ENCODE measurements at regions of chr7 and their contacts with region 1.

Region 1: GRCh38 chr7:5665094-5666025 is 116.1 kb downstream of the RNF216 start:
- DNase-seq: peak; percentile 78
- ATAC-seq: peak; percentile 52
- H3K4me3 ChIP-seq: no peak overlapping the region
- H3K4me3 Mint-ChIP-seq: no peak overlapping the region
- H3K27ac ChIP-seq: no peak overlapping the region
- H3K27ac Mint-ChIP-seq: no peak overlapping the region
- H3K4me1 ChIP-seq: peaks cover 19 to 28% of the 10 kb centered on the region in 2 donors
- H3K4me1 Mint-ChIP-seq: peaks cover 29% of the 10 kb centered on the region
- H3K27me3 ChIP-seq: no peaks in the 10 kb centered on the region
- H3K27me3 Mint-ChIP-seq: no peaks in the 10 kb centered on the region
- CTCF ChIP-seq: peak; percentile 85

Region 2: GRCh38 chr7:5557920-5558401 is 107.4 kb before region 1 on chr7:
- CTCF ChIA-PET with region 1: interaction called, 22 read pairs
- POLR2A ChIA-PET with region 1: no interaction called
- intact Hi-C with region 1: no loop called
- DNase-seq: peak; percentile 77
- ATAC-seq: peak; percentile 18
- H3K4me3 ChIP-seq: peak overlapping the region; percentile 41 to 67 (median 58)
- H3K4me3 Mint-ChIP-seq: peak overlapping the region; percentile 92
- H3K27ac ChIP-seq: peak overlapping the region; percentile 92 to 93
- H3K27ac Mint-ChIP-seq: peak overlapping the region; percentile 96
- H3K4me1 ChIP-seq: peaks cover 47 to 64% of the 10 kb centered on the region in 2 donors
- H3K4me1 Mint-ChIP-seq: peaks cover 52% of the 10 kb centered on the region
- H3K27me3 ChIP-seq: no peaks in the 10 kb centered on the region
- H3K27me3 Mint-ChIP-seq: no peaks in the 10 kb centered on the region
- CTCF ChIP-seq: no peak

Region 3: GRCh38 chr7:5677538-5678294 is 12.4 kb after region 1 on chr7:
- CTCF ChIA-PET with region 1: interaction called, 86 read pairs
- POLR2A ChIA-PET with region 1: interaction called, 3 read pairs
- intact Hi-C with region 1: no loop called
- DNase-seq: peak; percentile 74
- ATAC-seq: peak; percentile 22
- H3K4me3 ChIP-seq: no peak overlapping the region
- H3K4me3 Mint-ChIP-seq: no peak overlapping the region
- H3K27ac ChIP-seq: peak overlapping the region in 1 of 2 donors; percentile 32
- H3K27ac Mint-ChIP-seq: peak overlapping the region; percentile 57
- H3K4me1 ChIP-seq: peaks cover 51 to 54% of the 10 kb centered on the region in 2 donors
- H3K4me1 Mint-ChIP-seq: peaks cover 53% of the 10 kb centered on the region
- H3K27me3 ChIP-seq: no peaks in the 10 kb centered on the region
- H3K27me3 Mint-ChIP-seq: no peaks in the 10 kb centered on the region
- CTCF ChIP-seq: peak; percentile 77

Region 4: DNA sequence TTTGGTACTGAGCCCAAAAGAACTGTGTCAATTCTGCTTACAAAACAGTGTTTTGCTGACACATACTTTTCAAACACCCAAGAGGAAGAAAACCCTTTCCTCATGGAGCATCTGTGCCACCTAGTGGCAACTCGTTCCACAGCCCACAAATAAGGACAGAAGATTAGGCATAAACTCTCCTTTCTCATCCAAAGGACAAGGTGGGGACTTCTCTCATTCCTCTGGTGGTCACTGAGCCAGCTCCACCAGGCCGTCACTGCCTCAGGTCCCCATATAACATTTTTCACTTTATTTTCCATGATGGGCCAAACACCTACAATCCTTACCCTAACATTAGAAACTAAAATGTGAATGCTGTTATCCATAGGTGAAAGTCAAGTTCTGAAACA is 39.2 kb after region 1 on chr7:
- CTCF ChIA-PET with region 1: interaction called, 129 read pairs
- POLR2A ChIA-PET with region 1: no interaction called
- intact Hi-C with region 1: loop called (anchors 1 kb)
- DNase-seq: peak; percentile 87
- ATAC-seq: peak; percentile 54
- H3K4me3 ChIP-seq: no peak overlapping the region
- H3K4me3 Mint-ChIP-seq: no peak overlapping the region
- H3K27ac ChIP-seq: no peak overlapping the region
- H3K27ac Mint-ChIP-seq: no peak overlapping the region
- H3K4me1 ChIP-seq: peaks cover 15 to 30% of the 10 kb centered on the region in 2 donors
- H3K4me1 Mint-ChIP-seq: peaks cover 35% of the 10 kb centered on the region
- H3K27me3 ChIP-seq: no peaks in the 10 kb centered on the region
- H3K27me3 Mint-ChIP-seq: no peaks in the 10 kb centered on the region
- CTCF ChIP-seq: peak; percentile 93